ENCODE measurements at regions of chr19 and their contacts with region 1.

Region 1: GRCh38 chr19:47765523-47766358 is 12.8 kb upstream of the SELENOW start:
- DNase-seq: peak; percentile 76 to 91
- ATAC-seq: peak; percentile 61
- H3K4me3 ChIP-seq: no peak overlapping the region
- H3K27ac ChIP-seq: no peak overlapping the region
- H3K4me1 ChIP-seq: no peaks in the 10 kb centered on the region
- H3K27me3 ChIP-seq: no peaks in the 10 kb centered on the region

Region 2: DNA sequence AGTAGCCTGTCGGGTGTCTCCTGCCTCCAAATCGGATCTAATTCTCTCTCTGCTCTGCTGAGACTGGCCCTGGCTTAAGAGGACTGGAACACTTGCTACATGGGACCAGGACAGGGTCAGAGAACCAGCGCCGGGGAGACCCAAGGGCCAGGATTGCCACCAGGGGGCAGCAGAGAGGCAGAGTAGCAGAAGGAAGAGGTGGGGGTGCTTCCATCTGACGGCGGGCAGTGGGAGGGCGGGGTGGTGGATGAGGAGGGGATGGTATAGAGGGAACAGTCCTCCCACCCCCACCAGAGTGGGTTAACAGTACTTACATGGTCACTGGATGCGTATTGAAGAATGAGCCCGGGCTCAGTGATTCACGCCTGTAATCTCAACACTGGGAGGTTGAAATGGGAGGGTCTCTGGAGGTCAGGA is 24.7 kb after region 1 on chr19:
- intact Hi-C with region 1: loop called (anchors 1 to 2 kb)
- DNase-seq: peak; percentile 85 to 97
- ATAC-seq: peak; percentile 84
- H3K4me3 ChIP-seq: no peak overlapping the region
- H3K27ac ChIP-seq: no peak overlapping the region
- H3K4me1 ChIP-seq: peaks cover 0 to 3% of the 10 kb centered on the region in 2 donors
- H3K27me3 ChIP-seq: no peaks in the 10 kb centered on the region

Region 3: DNA sequence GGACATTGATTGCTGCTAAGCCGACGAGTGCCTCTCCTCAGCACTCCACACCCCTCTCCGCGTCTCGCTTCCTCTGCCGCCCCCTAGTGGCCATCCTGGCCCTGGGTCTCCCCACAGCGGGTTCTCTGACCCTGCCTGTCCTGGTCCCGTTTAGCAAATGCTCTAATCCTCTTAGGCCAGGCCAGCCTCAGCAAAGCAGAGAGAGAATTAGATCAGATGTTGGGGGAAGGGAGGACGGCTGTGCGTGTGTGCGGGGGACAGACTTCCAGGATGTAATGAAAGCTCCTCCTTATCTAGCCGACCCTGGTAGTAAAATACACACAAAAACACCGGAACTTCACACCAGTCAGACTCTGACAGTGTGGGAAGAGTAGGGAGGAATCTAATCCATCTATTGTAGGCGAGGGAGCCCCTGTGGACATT is 97.8 kb after region 1 on chr19:
- intact Hi-C with region 1: loop called (anchors 5 kb)
- DNase-seq: peak; percentile 87 to 97
- ATAC-seq: peak; percentile 87
- H3K4me3 ChIP-seq: no peak overlapping the region
- H3K27ac ChIP-seq: no peak overlapping the region
- H3K4me1 ChIP-seq: no peaks in the 10 kb centered on the region
- H3K27me3 ChIP-seq: no peaks in the 10 kb centered on the region